Uterus (tissue), 4 donors: ENCODE measurements at regions of chr13 and their contacts with region 1.

Region 1: GRCh38 chr13:21476893-21477472 is 17.9 kb upstream of the ZDHHC20 start:
- DNase-seq: peak; percentile 67 to 79
- H3K4me3 ChIP-seq: peak overlapping the region; percentile 15 to 17
- H3K27ac ChIP-seq: peak overlapping the region in 1 of 2 donors; percentile 32
- H3K4me1 ChIP-seq: no peaks in the 10 kb centered on the region
- H3K27me3 ChIP-seq: no peaks in the 10 kb centered on the region
- CTCF ChIP-seq: peak; percentile 78 to 91 (median 84)
- POLR2A ChIP-seq: peak in 1 of 2 donors; percentile 16

Region 2: GRCh38 chr13:20945952-20946383 is 531.0 kb before region 1 on chr13:
- intact Hi-C with region 1: no loop called
- DNase-seq: no peak
- H3K4me3 ChIP-seq: no peak overlapping the region
- H3K27ac ChIP-seq: no peak overlapping the region
- H3K4me1 ChIP-seq: no peaks in the 10 kb centered on the region
- H3K27me3 ChIP-seq: no peaks in the 10 kb centered on the region
- CTCF ChIP-seq: no peak
- POLR2A ChIP-seq: no peak

Region 3: GRCh38 chr13:21115231-21115630 is 361.8 kb before region 1 on chr13:
- intact Hi-C with region 1: loop called (anchors 10 kb)
- DNase-seq: no peak
- H3K4me3 ChIP-seq: no peak overlapping the region
- H3K27ac ChIP-seq: no peak overlapping the region
- H3K4me1 ChIP-seq: no peaks in the 10 kb centered on the region
- H3K27me3 ChIP-seq: no peaks in the 10 kb centered on the region
- CTCF ChIP-seq: no peak
- POLR2A ChIP-seq: no peak

Region 4: DNA sequence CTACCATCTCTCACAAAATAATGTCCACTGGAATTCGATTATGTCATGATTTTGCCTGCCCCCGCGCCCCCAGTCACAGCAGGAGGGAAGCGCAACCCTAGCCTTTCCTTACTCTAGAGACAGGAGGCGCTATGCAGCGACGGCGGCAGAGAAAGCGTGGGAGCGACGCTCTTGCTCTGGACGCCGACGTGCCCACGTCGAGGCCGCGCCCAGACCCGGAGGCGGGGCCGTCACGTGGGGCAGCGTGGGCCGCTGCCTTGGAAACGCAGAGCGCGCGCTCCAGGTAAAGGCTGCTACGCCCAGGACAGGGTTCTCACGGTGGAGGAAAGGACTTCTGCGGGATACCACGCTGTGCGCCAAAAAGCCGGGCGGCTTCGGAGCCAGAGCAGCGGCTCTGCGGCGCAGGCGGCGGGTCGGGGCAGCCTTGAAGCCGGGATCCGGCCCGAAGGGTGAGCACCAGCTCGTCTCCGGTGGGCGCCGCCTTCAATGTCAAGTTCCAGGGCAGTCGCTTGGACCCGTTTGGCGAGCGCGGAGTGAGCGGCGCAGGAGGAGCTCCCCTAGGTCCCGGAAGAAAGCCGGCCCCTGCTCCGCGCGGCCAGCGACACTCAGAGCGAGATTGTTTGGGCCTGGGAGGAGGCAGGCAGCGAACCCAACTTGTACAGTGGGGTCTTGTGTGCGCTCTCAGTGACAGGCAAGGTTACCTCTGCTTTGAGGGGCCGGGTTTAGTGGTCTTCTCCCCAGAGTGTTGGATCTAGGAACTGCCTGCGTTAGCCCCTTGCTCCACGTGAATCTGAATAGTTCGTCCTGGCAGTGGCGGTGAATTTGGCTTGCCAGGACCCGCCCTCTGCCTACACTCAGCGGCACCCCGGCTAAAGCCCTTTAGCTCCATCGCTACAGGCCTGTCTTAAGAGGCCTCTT is 178.8 kb before region 1 on chr13:
- intact Hi-C with region 1: loop called (anchors 10 kb)
- DNase-seq: peak; percentile 73 to 84
- H3K4me3 ChIP-seq: peak overlapping the region; percentile 82
- H3K27ac ChIP-seq: peak overlapping the region; percentile 67 to 82
- H3K4me1 ChIP-seq: peaks cover 0 to 6% of the 10 kb centered on the region in 2 donors
- H3K27me3 ChIP-seq: no peaks in the 10 kb centered on the region
- CTCF ChIP-seq: peak; percentile 93 to 98 (median 96)
- POLR2A ChIP-seq: peak in 1 of 2 donors; percentile 59